ENCODE measurements at regions of chr14 and their contacts with region 1.

Region 1: GRCh38 chr14:70027785-70028428 is 148.7 kb downstream of the SMOC1 start:
- DNase-seq: peak; percentile 87
- H3K4me3 Mint-ChIP-seq: no peak overlapping the region
- H3K27ac Mint-ChIP-seq: no peak overlapping the region
- H3K4me1 Mint-ChIP-seq: no peaks in the 10 kb centered on the region
- H3K27me3 Mint-ChIP-seq: no peaks in the 10 kb centered on the region
- CTCF ChIP-seq: peak; percentile 88

Region 2: DNA sequence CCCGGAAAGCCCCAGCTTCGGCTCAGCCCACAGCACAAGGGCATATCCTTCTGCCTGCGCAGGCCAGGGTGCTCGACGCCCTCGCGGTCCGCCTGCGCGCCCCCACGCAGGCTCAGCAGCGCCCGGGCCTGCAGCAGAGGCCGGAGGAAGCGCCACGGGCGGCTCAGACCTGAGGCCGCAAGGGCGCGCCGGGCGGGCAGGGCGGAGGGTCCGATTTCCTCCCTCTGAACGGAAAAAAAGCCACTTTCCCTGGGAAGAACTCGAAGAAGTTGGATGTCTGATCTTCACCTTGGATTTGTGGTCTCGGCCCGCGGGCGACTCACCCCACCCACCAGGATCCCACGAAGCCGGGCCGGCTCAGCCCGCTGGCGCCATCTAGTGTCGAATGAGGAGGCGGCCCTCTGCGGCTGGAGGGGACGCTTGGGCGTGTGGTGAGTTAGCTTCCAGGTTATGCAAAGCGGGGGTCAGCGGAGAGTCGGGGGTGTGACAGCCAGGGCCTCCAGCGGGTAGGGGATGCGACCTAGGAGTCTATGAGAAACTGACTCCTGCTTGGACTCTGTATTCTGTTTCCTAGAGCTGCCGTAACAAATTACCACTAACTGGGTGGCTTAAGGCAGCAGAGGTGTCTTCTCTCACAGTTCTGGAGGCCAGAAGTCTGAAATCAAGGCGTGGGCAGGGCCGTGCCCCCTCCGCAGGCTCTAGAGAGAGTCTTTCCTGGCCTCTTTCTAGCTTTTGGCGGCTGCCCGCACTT is 301.0 kb before region 1 on chr14:
- CTCF ChIA-PET with region 1: interaction called, 13 read pairs
- intact Hi-C with region 1: loop called (anchors 5 kb)
- DNase-seq: peak; percentile 83
- H3K4me3 Mint-ChIP-seq: peak overlapping the region; percentile 65
- H3K27ac Mint-ChIP-seq: no peak overlapping the region
- H3K4me1 Mint-ChIP-seq: peaks cover 14% of the 10 kb centered on the region
- H3K27me3 Mint-ChIP-seq: peaks cover 15% of the 10 kb centered on the region
- CTCF ChIP-seq: peak; percentile 94

Region 3: GRCh38 chr14:69766984-69767368 is 260.9 kb before region 1 on chr14 and contains the start of gene SRSF5:
- CTCF ChIA-PET with region 1: no interaction called
- intact Hi-C with region 1: no loop called
- DNase-seq: peak; percentile 94
- H3K4me3 Mint-ChIP-seq: peak within 1 kb of the TSS; percentile 100
- H3K27ac Mint-ChIP-seq: peak within 1 kb of the TSS; percentile 98
- H3K4me1 Mint-ChIP-seq: peaks cover 17% of the 10 kb centered on the region
- H3K27me3 Mint-ChIP-seq: no peaks in the 10 kb centered on the region
- CTCF ChIP-seq: no peak
- total RNA-seq, gene SRSF5: 253 and 256 TPM in 2 replicates

Region 4: GRCh38 chr14:69818757-69819191 is 209.1 kb before region 1 on chr14:
- CTCF ChIA-PET with region 1: interaction called, 42 read pairs
- intact Hi-C with region 1: loop called (anchors 1 kb)
- DNase-seq: peak; percentile 78
- H3K4me3 Mint-ChIP-seq: no peak overlapping the region
- H3K27ac Mint-ChIP-seq: no peak overlapping the region
- H3K4me1 Mint-ChIP-seq: peaks cover 10% of the 10 kb centered on the region
- H3K27me3 Mint-ChIP-seq: no peaks in the 10 kb centered on the region
- CTCF ChIP-seq: peak; percentile 80

Region 5: DNA sequence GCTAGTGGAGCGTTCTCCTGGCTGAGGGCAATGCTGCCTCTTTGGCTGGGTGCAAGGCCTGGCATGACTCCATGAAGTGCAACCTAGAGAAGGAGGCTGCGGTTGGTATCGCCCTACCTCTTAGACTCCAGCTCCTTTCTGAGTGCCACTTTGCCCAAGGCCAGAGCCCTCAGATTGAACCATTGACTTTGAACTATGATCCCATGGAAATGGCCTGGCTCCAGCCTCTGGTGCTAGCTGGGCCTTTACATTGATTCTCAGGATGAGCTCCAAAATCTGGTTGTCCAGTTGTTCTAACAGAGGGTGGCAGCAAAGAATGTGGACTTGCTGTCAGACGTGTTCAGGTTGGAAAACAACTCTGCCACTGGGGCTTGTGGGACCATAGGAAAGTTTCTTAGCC is 164.8 kb before region 1 on chr14:
- CTCF ChIA-PET with region 1: interaction called, 15 read pairs
- intact Hi-C with region 1: no loop called
- DNase-seq: no peak
- H3K4me3 Mint-ChIP-seq: no peak overlapping the region
- H3K27ac Mint-ChIP-seq: no peak overlapping the region
- H3K4me1 Mint-ChIP-seq: no peaks in the 10 kb centered on the region
- H3K27me3 Mint-ChIP-seq: peaks cover 38% of the 10 kb centered on the region
- CTCF ChIP-seq: no peak

Region 6: GRCh38 chr14:69879175-69880043 is 148.5 kb before region 1 on chr14 and contains the start of gene SMOC1:
- CTCF ChIA-PET with region 1: interaction called, 19 read pairs
- intact Hi-C with region 1: loop called (anchors 1 kb)
- DNase-seq: peak; percentile 96
- H3K4me3 Mint-ChIP-seq: peak within 1 kb of the TSS; percentile 79
- H3K27ac Mint-ChIP-seq: peak within 1 kb of the TSS; percentile 22
- H3K4me1 Mint-ChIP-seq: peaks cover 40% of the 10 kb centered on the region
- H3K27me3 Mint-ChIP-seq: no peaks in the 10 kb centered on the region
- CTCF ChIP-seq: no peak
- total RNA-seq, gene SMOC1: 21.4 and 39.6 TPM in 2 replicates

Region 7: DNA sequence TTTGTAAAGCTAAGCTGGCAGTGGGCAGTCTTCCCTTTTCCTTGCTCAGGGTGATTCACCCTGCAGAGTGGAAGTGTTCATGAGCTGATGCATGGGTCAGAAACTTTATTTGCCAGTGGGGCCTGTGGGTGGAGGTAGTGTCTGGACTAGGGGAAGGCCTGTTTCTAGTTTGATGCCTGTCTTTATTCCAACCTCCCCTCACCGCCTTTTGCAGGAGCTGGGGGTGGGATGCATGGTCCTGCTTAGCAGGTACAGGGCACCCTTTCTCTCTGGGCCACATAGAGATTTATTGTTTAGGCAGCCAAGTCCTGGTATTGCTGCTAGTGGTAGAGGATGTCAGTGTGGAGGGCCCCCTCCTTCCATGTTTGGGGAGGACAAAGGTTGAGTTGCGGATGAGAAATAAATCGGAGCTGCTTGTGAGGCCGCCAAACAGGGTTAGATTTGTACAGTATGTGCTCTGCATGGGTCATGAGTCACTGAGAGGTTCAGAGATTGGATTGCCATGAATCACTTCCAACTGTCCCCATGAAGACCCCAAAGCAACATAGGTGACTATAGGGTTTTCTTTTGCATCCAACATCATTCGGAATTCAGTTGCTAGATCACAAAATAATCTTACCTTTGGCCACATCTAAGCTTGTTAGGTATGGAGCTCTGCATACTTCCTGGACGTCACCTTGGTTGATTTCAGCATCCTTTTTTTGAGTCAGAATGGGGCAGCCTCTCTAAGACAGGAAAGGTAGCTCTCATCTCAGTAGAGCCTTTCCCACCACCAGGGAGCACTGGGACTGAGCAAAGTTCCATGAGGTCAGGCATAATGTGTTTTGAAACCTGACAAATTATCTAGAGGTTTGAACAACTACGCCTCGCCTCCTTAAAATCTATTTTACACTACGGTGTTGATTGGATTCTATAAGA is 139.9 kb before region 1 on chr14:
- CTCF ChIA-PET with region 1: interaction called, 10 read pairs
- intact Hi-C with region 1: no loop called
- DNase-seq: peak; percentile 36
- H3K4me3 Mint-ChIP-seq: peak overlapping the region; percentile 24
- H3K27ac Mint-ChIP-seq: peak overlapping the region; percentile 56
- H3K4me1 Mint-ChIP-seq: peaks cover 43% of the 10 kb centered on the region
- H3K27me3 Mint-ChIP-seq: no peaks in the 10 kb centered on the region
- CTCF ChIP-seq: no peak